ENCODE measurements at regions of chr1 and their contacts with region 1.

Region 1: GRCh38 chr1:207404849-207405525 is 49.1 kb upstream of the CR2 start:
- DNase-seq: peak; percentile 70 to 84 (median 81)
- H3K4me3 ChIP-seq: no peak overlapping the region
- H3K27ac ChIP-seq: no peak overlapping the region
- H3K4me1 ChIP-seq: peaks cover 0 to 6% (median 1%) of the 10 kb centered on the region in 4 experiments
- H3K27me3 ChIP-seq: no peaks in the 10 kb centered on the region

Region 2: DNA sequence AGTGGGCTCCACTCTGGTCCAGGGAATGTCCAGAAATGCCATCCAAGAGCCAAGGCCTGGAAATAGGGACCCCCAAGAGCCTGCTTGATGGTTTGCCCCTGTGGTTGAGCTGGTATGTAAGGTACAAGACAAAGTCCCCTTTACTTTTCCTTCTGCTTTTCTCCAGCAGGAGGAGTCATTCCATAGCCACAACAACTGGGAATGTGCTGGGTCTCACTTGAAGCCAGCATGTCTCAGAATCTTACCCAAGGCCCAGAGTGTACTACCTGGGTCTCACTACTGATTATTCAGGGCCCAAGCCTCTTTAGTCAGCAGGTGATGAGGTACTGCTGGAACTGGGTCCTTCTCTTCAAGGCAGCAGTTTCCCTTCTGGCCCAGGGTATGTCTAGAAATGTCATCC is 145.6 kb before region 1 on chr1:
- CTCF ChIA-PET with region 1: interaction called, 19 read pairs
- POLR2A ChIA-PET with region 1: no interaction called
- DNase-seq: peak; percentile 41 to 58 (median 50)
- H3K4me3 ChIP-seq: no peak overlapping the region
- H3K27ac ChIP-seq: no peak overlapping the region
- H3K4me1 ChIP-seq: no peaks in the 10 kb centered on the region
- H3K27me3 ChIP-seq: no peaks in the 10 kb centered on the region